GM12878 (cell line): ENCODE measurements at regions of chr1 and their contacts with region 1.

Region 1: DNA sequence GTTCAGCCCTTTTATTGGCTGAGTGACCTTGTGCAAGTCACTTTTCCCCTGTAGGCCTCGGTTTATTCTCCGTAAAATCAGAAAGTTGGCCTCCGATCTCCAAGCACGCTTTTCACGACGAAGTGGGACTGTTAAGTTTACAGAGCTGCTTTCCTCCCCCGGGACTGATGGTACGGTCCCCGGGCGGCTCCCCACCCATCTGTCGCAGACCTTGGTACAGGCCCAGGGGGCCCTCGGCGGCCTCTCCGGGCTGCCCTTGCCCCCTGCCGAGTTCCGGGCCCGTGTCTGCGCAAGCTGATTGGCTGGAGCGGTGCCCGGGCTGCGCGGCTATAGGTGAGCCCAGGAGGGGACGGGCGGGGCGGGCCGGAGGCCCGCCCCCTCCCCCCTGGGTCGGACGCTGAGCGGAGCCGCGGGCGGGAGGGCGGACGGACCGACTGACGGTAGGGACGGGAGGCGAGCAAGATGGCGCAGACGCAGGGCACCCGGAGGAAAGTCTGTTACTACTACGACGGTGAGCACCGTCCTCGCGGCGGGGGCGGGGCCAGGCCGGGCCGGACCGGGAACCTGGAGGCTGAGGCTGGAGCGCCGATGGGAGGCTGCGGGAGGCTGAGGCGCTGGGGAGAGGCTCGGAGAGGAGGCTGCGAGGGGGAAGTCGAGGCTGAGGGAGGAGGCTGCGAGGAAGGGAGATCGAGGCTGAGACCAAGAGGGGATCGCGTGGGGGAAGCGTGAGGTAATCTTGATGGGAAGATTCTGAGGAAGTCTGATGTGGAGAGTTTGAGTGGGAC is at the start of gene HDAC1:
- DNase-seq: peak; percentile 83
- ATAC-seq: peak; percentile 99
- H3K4me3 ChIP-seq: peak within 1 kb of the TSS; percentile 100
- H3K27ac ChIP-seq: peak within 1 kb of the TSS; percentile 92
- H3K4me1 ChIP-seq: peaks cover 3% of the 10 kb centered on the region; the same call in 1 of the 2 replicates
- H3K27me3 ChIP-seq: no peaks in the 10 kb centered on the region
- CTCF ChIP-seq: no peak
- EP300 ChIP-seq: peak in 1 of 2 experiments; percentile 34; a peak in 1 of 4 replicates
- POLR2A ChIP-seq: peak; percentile 94
- RAD21 ChIP-seq: no peak
- polyA plus RNA-seq, gene HDAC1: 150 to 151 TPM

Region 2: GRCh38 chr1:32240140-32240951 is 51.6 kb before region 1 on chr1:
- CTCF ChIA-PET with region 1: interaction called, 7 read pairs
- POLR2A ChIA-PET with region 1: interaction called, 5 read pairs
- RAD21 ChIA-PET with region 1: interaction called, 14 read pairs
- SMC1A ChIA-PET with region 1: interaction called, 7 read pairs
- in situ Hi-C with region 1: no loop called
- intact Hi-C with region 1: no loop called
- DNase-seq: no peak
- ATAC-seq: peak; percentile 81
- H3K4me3 ChIP-seq: peak overlapping the region; percentile 72
- H3K27ac ChIP-seq: peak overlapping the region; percentile 13; the same call in 1 of the 2 replicates
- H3K4me1 ChIP-seq: peaks cover 21% of the 10 kb centered on the region
- H3K27me3 ChIP-seq: no peaks in the 10 kb centered on the region
- CTCF ChIP-seq: peak in 2 of 3 experiments; percentile 27 to 46; a peak in 3 of 6 replicates
- EP300 ChIP-seq: no peak
- POLR2A ChIP-seq: no peak; the same call in 1 of the 2 replicates
- RAD21 ChIP-seq: no peak

Region 3: GRCh38 chr1:32255072-32256071 is 36.5 kb before region 1 on chr1:
- CTCF ChIA-PET with region 1: interaction called, 8 read pairs
- POLR2A ChIA-PET with region 1: interaction called, 16 read pairs
- RAD21 ChIA-PET with region 1: interaction called, 25 read pairs
- SMC1A ChIA-PET with region 1: interaction called, 14 read pairs
- in situ Hi-C with region 1: no loop called
- intact Hi-C with region 1: loop called (anchors 2 kb)
- DNase-seq: no peak
- ATAC-seq: peak; percentile 1; the same call in 2 of the 3 replicates
- H3K4me3 ChIP-seq: peak overlapping the region; percentile 33; the same call in 1 of the 2 replicates
- H3K27ac ChIP-seq: peak overlapping the region; percentile 89
- H3K4me1 ChIP-seq: peaks cover 66% of the 10 kb centered on the region
- H3K27me3 ChIP-seq: no peaks in the 10 kb centered on the region
- CTCF ChIP-seq: no peak
- EP300 ChIP-seq: no peak
- POLR2A ChIP-seq: no peak
- RAD21 ChIP-seq: no peak

Region 4: DNA sequence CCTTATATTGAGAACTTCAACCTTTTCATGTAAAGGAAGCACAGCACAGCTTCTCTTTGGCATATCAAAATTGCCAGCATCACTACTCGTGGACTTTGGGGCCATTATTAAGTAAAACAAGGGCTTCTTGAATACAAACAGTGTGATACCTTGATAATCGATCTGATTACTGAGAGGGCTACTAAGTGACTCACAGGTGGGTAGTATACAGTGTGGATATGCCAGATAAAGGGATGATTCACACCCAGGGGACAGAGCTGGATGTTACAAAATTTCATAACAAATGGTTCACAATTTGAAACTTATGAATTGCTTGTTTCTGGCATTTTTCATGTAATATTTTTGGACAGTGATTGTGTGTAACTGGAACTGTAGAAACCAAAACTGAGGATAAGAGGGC is 15.4 kb after region 1 on chr1:
- CTCF ChIA-PET with region 1: interaction called, 6 read pairs
- POLR2A ChIA-PET with region 1: interaction called, 3 read pairs
- RAD21 ChIA-PET with region 1: interaction called, 3 read pairs
- SMC1A ChIA-PET with region 1: interaction called, 11 read pairs
- in situ Hi-C with region 1: no loop called
- intact Hi-C with region 1: no loop called
- DNase-seq: no peak
- ATAC-seq: no peak
- H3K4me3 ChIP-seq: no peak overlapping the region
- H3K27ac ChIP-seq: 0 out of 2 replicates have a peak overlapping the region, but pooled peaks have one; percentile 8
- H3K4me1 ChIP-seq: peaks cover 14% of the 10 kb centered on the region
- H3K27me3 ChIP-seq: no peaks in the 10 kb centered on the region
- CTCF ChIP-seq: no peak
- EP300 ChIP-seq: no peak
- POLR2A ChIP-seq: no peak
- RAD21 ChIP-seq: no peak